Heart right ventricle (tissue), 16 donors: ENCODE measurements at regions of chr2 and their contacts with region 1.

Region 1: DNA sequence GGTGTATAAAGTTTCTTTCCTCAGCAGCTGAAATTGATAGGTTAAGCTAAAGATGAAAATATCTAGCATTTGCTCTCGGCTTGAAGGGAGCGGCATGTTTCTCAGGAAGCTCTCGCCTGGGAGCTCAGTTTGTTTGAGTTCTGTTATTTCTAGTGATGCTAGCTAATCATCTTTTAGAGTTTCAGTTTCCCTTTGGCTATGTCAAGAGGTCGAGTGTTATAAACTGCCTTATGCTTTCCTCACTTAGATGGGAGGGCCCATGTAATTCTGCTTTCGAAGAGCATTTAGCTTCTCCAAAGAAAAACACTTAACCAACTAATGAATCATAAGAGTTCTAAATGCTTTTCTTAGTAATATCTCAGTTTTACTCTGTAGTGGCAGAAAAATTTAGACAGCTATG is 33.6 kb downstream of the PLCL1 start:
- DNase-seq: peak in 1 of 2 donors; percentile 18
- ATAC-seq: peak; percentile 60 to 93 (median 84)
- H3K4me3 ChIP-seq: peak overlapping the region in 7 of 10 donors; percentile 4 to 37 (median 33)
- H3K27ac ChIP-seq: peak overlapping the region in 8 of 10 donors; percentile 36 to 75 (median 56)
- H3K4me1 ChIP-seq: peaks cover 0 to 49% (median 30%) of the 10 kb centered on the region in 9 donors
- H3K27me3 ChIP-seq: no peaks in the 10 kb centered on the region
- CTCF ChIP-seq: no peak

Region 2: DNA sequence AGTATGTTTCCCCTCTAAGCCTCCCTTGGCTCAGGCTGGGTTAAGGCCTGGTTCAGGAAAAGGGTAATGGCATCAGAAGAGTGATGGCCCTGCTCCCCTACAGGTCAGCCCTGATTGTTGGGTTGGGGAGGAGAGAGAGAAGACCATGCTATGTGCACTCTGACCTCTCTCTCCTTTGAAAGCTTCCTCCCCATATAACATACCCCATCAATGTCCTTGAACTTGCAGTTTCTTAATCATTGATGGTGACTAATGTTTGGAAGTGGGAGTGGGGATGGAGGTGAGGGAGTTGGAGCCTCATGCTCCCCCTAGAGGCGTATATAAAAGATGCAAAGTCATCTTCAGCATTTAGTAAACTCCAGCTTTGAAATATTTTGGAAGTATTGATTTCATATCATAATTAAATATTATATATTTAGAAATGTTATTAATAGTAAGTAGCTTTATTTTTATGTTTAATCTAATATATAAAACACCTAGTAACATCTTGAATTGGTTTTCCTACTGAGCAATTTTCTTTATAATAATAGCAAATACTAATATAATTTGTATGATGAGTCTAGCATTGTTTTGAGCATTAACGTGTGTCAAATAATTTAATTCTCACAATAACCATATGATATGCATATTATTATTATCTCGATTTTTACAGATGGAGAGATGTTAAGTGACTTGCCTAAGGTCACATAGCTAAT is 24.8 kb before region 1 on chr2:
- intact Hi-C with region 1: loop called in 1 of 10 experiments (anchors 2 kb)
- DNase-seq: no peak
- ATAC-seq: peak in 2 of 8 donors; percentile 40 to 55
- H3K4me3 ChIP-seq: no peak overlapping the region
- H3K27ac ChIP-seq: no peak overlapping the region
- H3K4me1 ChIP-seq: peaks cover 0 to 33% (median 5%) of the 10 kb centered on the region in 9 donors
- H3K27me3 ChIP-seq: no peaks in the 10 kb centered on the region
- CTCF ChIP-seq: peak; percentile 29 to 61 (median 52)

Region 3: DNA sequence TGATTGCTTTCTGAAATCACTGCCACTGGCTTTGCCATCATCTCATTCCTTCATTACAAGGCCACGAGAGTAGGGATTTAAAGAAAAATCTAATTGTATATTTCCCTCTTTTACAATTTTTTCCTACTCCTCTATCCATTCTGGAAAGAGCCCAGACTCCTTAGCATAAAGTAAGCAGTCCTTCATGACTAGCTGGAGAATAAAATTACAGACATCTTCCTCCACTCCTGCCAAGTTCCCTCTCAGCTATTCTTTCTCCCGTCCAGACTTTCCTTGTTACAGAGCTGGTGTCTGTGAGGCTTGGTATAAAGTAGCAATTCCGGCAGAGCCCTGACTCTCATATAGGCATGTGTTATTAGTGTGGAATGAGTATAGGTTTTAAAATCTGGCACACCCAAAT is 773.2 kb after region 1 on chr2:
- intact Hi-C with region 1: loop called in 1 of 10 experiments (anchors 5 kb)
- DNase-seq: no peak
- ATAC-seq: no peak
- H3K4me3 ChIP-seq: no peak overlapping the region
- H3K27ac ChIP-seq: no peak overlapping the region
- H3K4me1 ChIP-seq: no peaks in the 10 kb centered on the region
- H3K27me3 ChIP-seq: peaks cover 0 to 4% (median 0%) of the 10 kb centered on the region in 7 donors
- CTCF ChIP-seq: no peak